ENCODE measurements at regions of chr20 and their contacts with region 1.

Region 1: DNA sequence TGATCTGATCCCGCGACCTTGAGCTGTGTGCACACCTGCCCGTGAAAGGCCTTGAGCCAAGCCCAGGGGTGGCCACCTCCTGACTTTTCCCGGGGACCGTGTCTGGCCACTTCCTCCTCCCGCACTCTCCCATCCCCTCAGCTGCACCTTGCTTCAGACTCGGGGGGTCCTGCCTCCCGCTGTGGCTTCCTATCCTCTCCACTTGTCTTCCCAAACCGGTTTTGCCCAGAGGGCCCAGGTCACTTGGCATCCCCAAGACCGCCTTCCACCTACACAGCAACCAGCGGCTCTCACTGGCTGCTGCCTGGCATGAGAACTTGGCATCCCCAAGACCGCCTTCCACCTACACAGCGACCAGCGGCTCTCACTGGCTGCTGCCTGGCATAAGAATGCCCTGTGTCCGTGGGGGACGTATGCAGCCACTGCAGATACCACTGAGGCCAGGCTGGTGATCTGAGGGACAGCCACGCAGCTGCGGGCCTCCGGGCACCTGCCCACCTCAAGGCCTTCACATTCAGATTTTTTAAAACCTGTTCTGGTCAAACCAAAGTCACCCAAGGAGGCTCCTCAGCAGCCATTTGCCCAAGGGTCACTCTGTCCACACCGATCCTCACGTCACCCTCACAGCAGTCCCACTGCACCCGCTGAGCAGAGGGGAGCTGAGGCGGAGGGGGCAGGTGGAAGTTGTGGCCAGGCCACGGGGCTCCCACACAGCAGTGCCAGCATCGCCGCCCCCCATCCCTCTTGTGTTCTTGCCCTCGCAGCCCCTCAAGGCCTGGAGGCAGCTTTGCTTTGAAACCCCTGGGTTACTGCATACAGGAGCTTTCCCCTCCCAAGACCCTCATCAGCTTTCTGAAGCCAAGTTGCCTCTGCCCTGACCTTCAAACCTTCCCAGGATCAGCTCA is 245.5 kb downstream of the TAF4 start:
- DNase-seq: no peak

Region 2: DNA sequence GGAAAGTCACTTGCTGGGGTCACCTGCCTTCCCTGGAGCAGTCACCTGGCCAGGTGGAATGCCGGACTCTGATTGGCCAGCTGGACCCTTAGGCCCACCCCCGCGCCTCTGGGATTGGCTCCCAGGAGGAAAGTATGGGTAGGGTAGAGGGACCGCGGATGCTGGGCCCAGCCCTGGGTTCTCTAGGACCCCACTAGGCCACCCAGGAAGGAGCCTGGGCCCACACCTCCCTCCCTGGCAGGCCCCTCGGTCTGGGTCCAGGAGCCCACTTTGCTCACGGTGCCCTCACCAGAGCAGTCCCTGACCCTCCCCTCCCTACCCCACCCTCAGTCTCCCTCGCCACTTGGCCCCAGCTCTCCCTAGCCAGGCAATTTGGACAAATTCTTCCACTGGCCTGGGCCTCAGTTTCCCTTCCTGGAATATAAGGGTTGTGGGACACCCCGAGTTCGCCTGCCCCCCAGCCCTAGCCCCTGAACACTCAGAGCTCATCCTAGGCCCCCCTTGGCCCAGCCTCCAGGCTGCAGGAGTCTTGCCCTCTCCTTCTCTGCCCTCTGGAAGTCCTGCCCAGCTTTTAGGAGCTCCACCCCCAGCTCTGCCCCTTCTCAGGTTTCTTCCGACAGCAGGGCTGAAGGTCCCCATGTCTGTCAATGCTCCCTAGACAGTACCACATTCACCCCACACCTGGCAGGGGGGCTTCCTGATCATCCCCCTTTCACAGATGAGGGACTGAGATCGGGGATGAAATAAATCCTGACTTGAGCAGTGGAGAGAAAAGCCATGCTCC is 54.1 kb before region 1 on chr20:
- intact Hi-C with region 1: loop called in 1 of 2 experiments (anchors 10 kb)
- DNase-seq: peak; percentile 72

Region 3: DNA sequence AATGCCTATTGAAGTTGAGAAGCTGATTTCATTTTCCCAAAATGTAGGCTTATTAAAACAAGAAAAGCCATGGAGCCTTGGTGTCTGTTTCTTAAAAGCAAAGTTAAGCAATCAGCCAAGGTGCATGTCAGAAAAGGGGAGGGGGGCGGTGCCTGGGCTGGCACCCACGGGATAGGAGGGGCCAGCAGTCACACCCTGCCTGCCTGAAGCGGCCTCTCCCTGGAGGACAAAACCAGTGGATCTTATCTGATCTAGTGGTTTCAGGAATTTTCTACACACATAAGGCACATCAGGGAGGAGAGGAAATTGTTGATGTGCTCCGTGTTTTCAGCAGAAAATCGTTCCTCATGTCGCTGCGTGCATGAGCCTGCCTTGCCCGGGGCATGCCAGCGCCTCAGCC is 30.9 kb before region 1 on chr20:
- intact Hi-C with region 1: loop called in 1 of 2 experiments (anchors 1 kb)
- DNase-seq: no peak

Region 4: DNA sequence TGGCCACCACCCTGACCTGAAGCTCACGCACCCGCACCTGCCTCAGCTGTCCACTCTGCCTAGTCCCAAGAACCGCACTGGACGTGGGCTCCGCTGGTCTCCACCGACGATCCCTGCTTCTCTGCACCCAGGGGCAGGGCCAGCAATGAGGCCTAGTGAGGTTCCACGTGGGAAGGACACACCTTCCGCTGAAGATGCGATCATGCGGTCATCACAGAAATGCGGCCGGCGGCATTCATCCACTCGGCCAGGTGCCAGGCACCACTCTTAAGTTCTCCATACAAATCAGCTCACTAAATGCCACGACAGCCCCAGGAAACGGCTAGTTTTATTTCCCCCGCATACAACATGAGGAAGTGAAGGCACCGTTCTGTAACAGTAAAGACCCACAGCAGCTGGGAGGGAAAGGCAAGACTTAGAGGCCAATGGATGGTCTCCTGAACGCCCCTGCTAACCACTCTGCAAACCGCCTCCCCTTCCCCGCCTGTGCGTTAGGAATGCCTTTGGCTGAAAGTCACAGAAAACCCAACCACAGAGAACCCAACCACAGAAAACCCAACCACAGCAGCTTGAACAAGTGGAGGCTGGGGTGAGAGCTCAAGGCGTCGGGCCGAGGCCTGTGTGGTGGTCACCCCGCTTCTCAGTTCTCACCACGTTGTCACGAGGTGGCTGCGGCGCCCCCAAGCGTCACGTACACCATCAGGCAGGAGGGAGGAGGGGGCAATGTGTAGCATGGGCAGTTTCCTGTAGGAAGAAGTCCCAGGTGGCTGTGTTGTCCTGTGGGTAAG is 41.1 kb after region 1 on chr20:
- intact Hi-C with region 1: no loop called
- DNase-seq: no peak

Measured in posterior vena cava (tissue), 2 donors.